ENCODE measurements at regions of chr1 and their contacts with region 1.

Region 1: DNA sequence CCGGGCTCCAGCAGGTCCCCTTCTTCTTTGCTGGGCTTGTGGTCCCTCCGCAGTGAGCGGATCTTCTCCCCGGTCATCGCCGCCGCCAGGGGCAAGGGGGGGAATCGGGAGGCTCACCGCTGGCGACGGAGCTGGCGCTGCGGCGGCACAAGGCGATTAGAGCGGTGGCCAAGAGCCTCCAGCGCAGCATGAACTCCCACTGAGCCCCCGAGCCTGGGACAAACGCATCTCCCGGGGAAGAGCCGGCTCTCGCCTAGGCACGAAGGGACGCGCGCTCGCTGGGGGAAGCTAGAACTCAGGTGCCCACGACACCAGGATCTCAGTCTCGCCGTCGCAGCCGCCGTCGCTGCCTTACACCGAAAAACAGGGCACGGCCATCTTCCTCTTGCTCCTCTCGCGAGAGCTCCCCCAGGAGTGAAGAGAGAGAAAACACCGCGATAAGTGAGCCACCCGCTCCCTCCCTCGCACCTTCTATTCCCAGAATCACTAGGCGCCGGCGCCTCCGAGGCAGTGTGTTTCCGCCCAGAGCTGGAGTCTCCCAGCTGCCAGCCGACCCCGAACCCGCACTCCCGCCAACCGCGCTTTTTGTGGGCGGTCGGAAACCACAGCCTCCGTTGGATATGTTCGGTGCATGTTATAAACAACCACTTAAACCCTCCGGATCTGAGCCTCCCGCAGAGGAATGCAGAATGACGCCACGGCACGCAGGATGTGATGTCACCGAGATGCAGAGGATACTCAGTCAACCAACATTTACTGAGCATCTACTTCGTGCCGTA is at the start of gene ANKRD13C:
- DNase-seq: peak; percentile 97
- H3K4me3 Mint-ChIP-seq: peak within 1 kb of the TSS; percentile 98
- H3K27ac Mint-ChIP-seq: peak within 1 kb of the TSS; percentile 99
- H3K4me1 Mint-ChIP-seq: peaks cover 36% of the 10 kb centered on the region
- H3K27me3 Mint-ChIP-seq: no peaks in the 10 kb centered on the region
- total RNA-seq, gene ANKRD13C: 9.2 to 10.3 TPM

Region 2: GRCh38 chr1:70205434-70206118 is 148.9 kb before region 1 on chr1 and contains the start of gene LRRC40:
- CTCF ChIA-PET with region 1: interaction called, 3 read pairs
- intact Hi-C with region 1: loop called (anchors 1 kb)
- DNase-seq: peak; percentile 97
- H3K4me3 Mint-ChIP-seq: peak within 1 kb of the TSS; percentile 96
- H3K27ac Mint-ChIP-seq: peak within 1 kb of the TSS; percentile 95
- H3K4me1 Mint-ChIP-seq: peaks cover 62% of the 10 kb centered on the region
- H3K27me3 Mint-ChIP-seq: no peaks in the 10 kb centered on the region
- total RNA-seq, gene LRRC40: 20.4 to 20.5 TPM

Region 3: DNA sequence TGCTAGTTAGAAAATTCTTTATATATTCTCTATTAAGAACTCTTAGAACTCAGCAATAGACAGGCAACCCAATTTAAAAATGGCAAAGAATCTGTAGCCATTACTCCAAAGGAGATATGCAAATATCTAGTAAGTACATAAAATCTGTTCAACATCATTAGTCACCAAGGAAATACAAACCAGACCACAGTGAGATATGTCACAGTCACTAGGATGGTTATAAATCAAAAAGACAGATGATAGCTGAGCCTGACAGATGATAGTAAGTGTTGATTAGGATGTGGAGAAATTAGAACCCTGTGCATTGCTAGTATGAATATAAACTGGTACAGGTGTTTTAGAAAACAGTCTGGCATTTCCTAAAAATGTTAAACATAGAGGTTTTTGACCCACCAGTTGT is 106.8 kb before region 1 on chr1:
- CTCF ChIA-PET with region 1: no interaction called
- intact Hi-C with region 1: loop called (anchors 2 kb)
- DNase-seq: no peak
- H3K4me3 Mint-ChIP-seq: no peak overlapping the region
- H3K27ac Mint-ChIP-seq: peak overlapping the region; percentile 84
- H3K4me1 Mint-ChIP-seq: peaks cover 34% of the 10 kb centered on the region
- H3K27me3 Mint-ChIP-seq: no peaks in the 10 kb centered on the region

Region 4: DNA sequence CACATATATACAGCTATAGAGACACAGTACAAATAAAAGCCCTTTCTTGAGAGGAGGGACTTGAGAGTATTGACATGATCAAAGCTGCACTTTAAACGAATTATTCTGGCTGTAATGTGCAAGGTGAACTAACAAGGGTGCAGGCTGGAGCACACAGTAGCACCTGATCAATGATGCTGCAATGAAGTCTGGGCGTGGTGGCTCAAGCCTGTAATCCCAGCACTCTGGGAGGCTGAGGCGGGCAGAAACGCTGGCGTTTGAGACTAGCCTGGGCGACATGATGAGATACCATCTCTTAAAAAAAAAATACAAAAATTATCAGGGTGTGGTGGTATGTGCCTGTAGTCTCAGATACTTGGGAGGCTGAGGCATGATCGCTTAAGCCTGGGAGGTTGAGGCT is 42.5 kb after region 1 on chr1:
- CTCF ChIA-PET with region 1: no interaction called
- intact Hi-C with region 1: loop called (anchors 2 kb)
- DNase-seq: no peak
- H3K4me3 Mint-ChIP-seq: no peak overlapping the region
- H3K27ac Mint-ChIP-seq: no peak overlapping the region
- H3K4me1 Mint-ChIP-seq: no peaks in the 10 kb centered on the region
- H3K27me3 Mint-ChIP-seq: peaks cover 2% of the 10 kb centered on the region